H1 (cell line): ENCODE measurements at regions of chr3 and their contacts with region 1.

Region 1: GRCh38 chr3:73624821-73625665 is at the start of gene PDZRN3:
- DNase-seq: peak; percentile 34 to 86
- H3K4me3 ChIP-seq: peak within 1 kb of the TSS; percentile 66 to 79 (median 69)
- H3K27ac ChIP-seq: no peak within 1 kb of the TSS
- H3K4me1 ChIP-seq: peaks cover 8 to 25% (median 9%) of the 10 kb centered on the region in 4 experiments
- H3K27me3 ChIP-seq: peaks cover 0 to 18% (median 9%) of the 10 kb centered on the region in 4 experiments; a peak in 5 of 7 replicates
- CTCF ChIP-seq: no peak
- EP300 ChIP-seq: no peak
- POLR2A ChIP-seq: peak in 1 of 2 experiments; percentile 66; a peak in 2 of 3 replicates
- RAD21 ChIP-seq: no peak
- total RNA-seq, gene PDZRN3: 16.8 and 20.5 TPM in 2 replicates

Region 2: GRCh38 chr3:73259856-73260255 is 365.2 kb before region 1 on chr3:
- CTCF ChIA-PET with region 1: no interaction called
- POLR2A ChIA-PET with region 1: no interaction called
- DNase-seq: no peak
- H3K4me3 ChIP-seq: no peak overlapping the region
- H3K27ac ChIP-seq: no peak overlapping the region
- H3K4me1 ChIP-seq: peaks cover 0 to 5% (median 0%) of the 10 kb centered on the region in 4 experiments; a peak in 2 of 7 replicates
- H3K27me3 ChIP-seq: no peaks in the 10 kb centered on the region
- CTCF ChIP-seq: no peak
- EP300 ChIP-seq: no peak
- POLR2A ChIP-seq: no peak
- RAD21 ChIP-seq: no peak

Region 3: GRCh38 chr3:73572368-73572767 is 52.7 kb before region 1 on chr3:
- CTCF ChIA-PET with region 1: no interaction called
- POLR2A ChIA-PET with region 1: no interaction called
- DNase-seq: no peak
- H3K4me3 ChIP-seq: no peak overlapping the region
- H3K27ac ChIP-seq: no peak overlapping the region
- H3K4me1 ChIP-seq: no peaks in the 10 kb centered on the region
- H3K27me3 ChIP-seq: no peaks in the 10 kb centered on the region
- CTCF ChIP-seq: no peak
- EP300 ChIP-seq: no peak
- POLR2A ChIP-seq: no peak
- RAD21 ChIP-seq: no peak

Region 4: GRCh38 chr3:73614411-73614810 is 10.6 kb before region 1 on chr3:
- CTCF ChIA-PET with region 1: interaction called, 14 read pairs
- POLR2A ChIA-PET with region 1: interaction called, 4 read pairs
- DNase-seq: no peak
- H3K4me3 ChIP-seq: no peak overlapping the region
- H3K27ac ChIP-seq: no peak overlapping the region
- H3K4me1 ChIP-seq: peaks cover 0 to 5% (median 0%) of the 10 kb centered on the region in 4 experiments; a peak in 1 of 7 replicates
- H3K27me3 ChIP-seq: no peaks in the 10 kb centered on the region
- CTCF ChIP-seq: no peak
- EP300 ChIP-seq: no peak
- POLR2A ChIP-seq: no peak
- RAD21 ChIP-seq: no peak

Region 5: GRCh38 chr3:73848173-73848906 is 223.3 kb after region 1 on chr3:
- CTCF ChIA-PET with region 1: interaction called, 11 read pairs
- POLR2A ChIA-PET with region 1: no interaction called
- DNase-seq: no peak
- H3K4me3 ChIP-seq: no peak overlapping the region
- H3K27ac ChIP-seq: no peak overlapping the region
- H3K4me1 ChIP-seq: peaks cover 0 to 4% (median 0%) of the 10 kb centered on the region in 4 experiments; a peak in 1 of 7 replicates
- H3K27me3 ChIP-seq: no peaks in the 10 kb centered on the region
- CTCF ChIP-seq: peak in 2 of 3 experiments; percentile 36 to 56; a peak in 2 of 4 replicates
- EP300 ChIP-seq: no peak
- POLR2A ChIP-seq: no peak
- RAD21 ChIP-seq: peak; percentile 65 to 67